Colonic mucosa (tissue), 4 donors: ENCODE measurements at regions of chr3 and their contacts with region 1.

Region 1: DNA sequence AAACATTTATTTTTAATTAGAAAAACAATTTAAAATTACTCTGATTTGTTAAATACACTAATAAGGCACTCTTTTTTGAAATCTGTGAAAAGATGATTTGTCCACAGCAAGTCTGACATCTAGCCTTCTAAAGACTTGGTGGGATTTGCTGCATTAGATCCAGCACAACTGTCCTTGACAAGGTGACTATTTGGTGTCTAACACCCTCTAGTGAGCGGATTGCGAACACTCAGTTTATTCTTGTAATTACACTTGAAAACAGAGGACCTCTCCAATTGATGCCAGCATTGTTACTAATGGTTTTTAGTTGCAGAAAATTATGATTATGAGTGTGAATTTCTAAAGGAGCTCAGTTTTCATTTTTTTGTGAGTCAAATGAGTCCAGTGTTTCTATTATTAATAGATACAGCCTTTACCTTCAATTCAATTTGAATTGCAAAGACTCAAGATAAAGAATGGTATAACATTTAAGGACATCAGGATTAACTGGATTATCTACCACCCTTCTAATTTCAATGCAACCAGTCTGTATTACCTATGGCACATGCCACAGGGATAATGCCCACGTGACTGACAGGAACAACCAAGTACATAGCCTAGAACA is 29.7 kb upstream of the STRIT1 start:
- DNase-seq: peak; percentile 29
- H3K4me3 ChIP-seq: no peak overlapping the region
- H3K27ac ChIP-seq: no peak overlapping the region
- H3K4me1 ChIP-seq: no peaks in the 10 kb centered on the region
- H3K27me3 ChIP-seq: no peaks in the 10 kb centered on the region
- CTCF ChIP-seq: peak; percentile 66

Region 2: GRCh38 chr3:154334973-154335420 is 988.2 kb before region 1 on chr3:
- intact Hi-C with region 1: loop called (anchors 10 kb)
- DNase-seq: no peak
- H3K4me3 ChIP-seq: no peak overlapping the region
- H3K27ac ChIP-seq: no peak overlapping the region
- H3K4me1 ChIP-seq: no peaks in the 10 kb centered on the region
- H3K27me3 ChIP-seq: no peaks in the 10 kb centered on the region
- CTCF ChIP-seq: peak; percentile 50

Region 3: DNA sequence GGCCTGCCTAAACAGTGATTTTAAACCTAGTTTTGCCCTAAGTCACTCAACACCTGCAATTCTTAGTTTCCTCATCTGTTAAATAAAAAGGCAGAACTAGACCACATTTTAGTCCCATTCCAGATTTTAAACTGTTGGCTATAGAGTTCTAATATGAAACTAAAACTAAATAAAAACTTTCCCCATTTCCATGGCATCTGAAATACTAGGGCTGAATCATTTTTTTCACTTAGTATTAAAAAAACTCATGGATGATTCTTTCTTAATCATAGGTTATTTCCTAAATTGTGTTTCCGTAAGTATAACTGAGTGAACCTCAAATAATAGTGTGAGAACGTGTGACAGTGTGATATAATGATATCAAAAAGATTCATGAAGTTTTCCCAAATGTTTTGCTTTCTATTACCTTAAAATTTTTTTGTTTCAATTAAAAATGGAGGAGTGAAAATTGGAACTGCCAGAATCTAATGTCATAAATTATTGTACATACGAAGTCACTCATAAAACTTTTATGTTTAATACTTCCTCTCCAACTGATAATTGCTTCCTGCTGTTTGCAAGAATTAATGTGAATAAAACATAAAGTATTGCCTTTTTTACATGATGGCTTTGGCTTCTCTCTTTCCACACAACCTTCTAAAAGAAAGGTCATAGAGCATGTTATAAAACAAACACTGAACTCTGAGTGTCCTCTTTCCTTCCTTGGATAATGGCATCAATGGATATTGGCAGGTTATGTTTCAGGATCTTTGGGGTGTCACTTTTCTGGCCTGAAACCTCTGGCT is 558.1 kb before region 1 on chr3:
- intact Hi-C with region 1: loop called (anchors 5 kb)
- DNase-seq: no peak
- H3K4me3 ChIP-seq: no peak overlapping the region
- H3K27ac ChIP-seq: no peak overlapping the region
- H3K4me1 ChIP-seq: no peaks in the 10 kb centered on the region
- H3K27me3 ChIP-seq: no peaks in the 10 kb centered on the region
- CTCF ChIP-seq: no peak

Region 4: GRCh38 chr3:154954753-154955152 is 368.4 kb before region 1 on chr3:
- intact Hi-C with region 1: loop called (anchors 5 kb)
- DNase-seq: no peak
- H3K4me3 ChIP-seq: no peak overlapping the region
- H3K27ac ChIP-seq: no peak overlapping the region
- H3K4me1 ChIP-seq: no peaks in the 10 kb centered on the region
- H3K27me3 ChIP-seq: no peaks in the 10 kb centered on the region
- CTCF ChIP-seq: no peak